ENCODE measurements at regions of chr7 and their contacts with region 1.

Region 1: DNA sequence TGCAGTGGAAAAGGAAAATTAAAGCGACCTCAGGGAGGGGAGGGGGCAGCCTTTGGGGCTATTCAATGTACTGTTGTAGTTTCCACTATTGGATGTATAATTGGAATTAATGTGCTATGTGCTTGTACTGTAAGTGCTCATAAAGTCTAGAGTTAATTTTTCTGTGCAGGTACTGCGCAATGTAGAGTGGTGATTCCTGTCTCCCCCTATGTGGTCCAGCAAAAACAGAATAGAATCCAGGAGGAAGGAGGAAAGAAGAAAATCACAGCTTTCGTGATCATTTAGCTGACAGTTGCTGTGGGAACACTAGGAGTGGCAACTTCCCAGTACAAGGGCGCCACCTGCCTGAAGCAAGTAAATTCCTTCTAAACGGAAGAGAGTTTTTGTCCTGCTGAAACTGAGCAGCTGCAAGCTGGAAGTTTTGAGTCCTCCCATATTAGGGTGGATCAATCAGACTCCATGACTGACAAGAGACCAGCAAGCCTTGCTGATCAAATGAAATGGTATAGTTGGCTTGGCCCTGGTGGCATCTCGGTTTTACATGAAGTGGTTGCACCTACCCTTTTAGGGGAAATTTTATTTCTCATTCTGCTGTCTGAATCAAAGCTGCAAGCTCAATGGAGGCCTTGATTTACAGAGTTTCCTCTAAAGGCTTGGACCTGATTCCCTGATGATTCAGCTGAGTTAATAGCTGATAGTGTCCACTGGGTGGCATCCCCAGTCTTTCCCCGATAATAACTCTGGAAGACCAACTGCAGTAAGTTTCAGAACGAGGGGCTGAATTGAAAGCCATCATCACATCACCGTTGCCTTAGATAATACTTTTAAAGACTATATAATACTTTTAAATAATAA is 299.8 kb downstream of the HGF start:
- DNase-seq: no peak
- H3K4me3 ChIP-seq: no peak overlapping the region
- CTCF ChIP-seq: peak; percentile 72

Region 2: DNA sequence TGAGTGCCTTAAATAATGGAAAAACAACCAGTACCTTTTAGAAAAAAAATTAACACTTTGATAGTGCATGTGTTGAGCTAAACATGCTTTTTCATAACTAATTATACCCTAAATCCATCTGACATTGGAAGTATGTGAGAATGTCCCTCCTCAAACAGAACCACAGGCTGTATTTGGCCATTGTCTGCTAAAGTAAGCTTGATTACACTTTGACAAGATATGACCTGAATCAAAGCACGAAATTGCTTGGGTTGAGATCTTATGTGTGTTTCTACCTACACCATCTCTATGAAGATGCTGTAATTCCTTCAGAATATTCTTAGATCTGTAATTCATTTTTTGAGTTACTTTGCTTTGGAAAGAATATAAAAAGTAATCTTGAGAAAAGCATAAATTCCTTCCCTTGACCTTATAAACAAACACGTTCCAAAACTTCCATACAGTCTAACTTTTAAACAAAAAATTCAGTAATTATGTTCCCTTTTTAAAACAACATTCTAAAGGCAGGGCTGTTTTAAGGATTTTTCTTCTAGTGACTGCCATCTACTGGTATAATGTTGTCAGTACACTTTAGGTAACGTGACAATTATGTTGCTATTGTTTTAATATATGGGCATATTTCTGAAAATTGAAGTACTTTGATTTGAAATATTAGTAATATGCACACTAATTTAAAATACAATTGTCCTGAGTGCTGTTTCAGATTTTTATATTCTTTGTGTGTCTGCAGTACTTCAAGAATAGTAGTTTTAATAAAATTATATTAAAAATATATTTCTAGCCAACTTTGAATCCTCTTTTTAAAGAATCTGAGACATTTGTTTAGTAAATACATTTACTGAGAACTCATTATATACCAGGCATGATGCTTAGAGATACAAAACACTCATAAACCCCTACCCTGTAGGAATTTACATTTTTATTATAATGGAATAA is 810.7 kb before region 1 on chr7:
- CTCF ChIA-PET with region 1: interaction called, 23 read pairs
- POLR2A ChIA-PET with region 1: interaction called, 3 read pairs
- DNase-seq: no peak
- H3K4me3 ChIP-seq: no peak overlapping the region
- CTCF ChIP-seq: peak; percentile 26

Region 3: GRCh38 chr7:80699045-80699638 is 771.0 kb before region 1 on chr7:
- CTCF ChIA-PET with region 1: interaction called, 92 read pairs
- POLR2A ChIA-PET with region 1: no interaction called
- DNase-seq: no peak
- H3K4me3 ChIP-seq: no peak overlapping the region
- CTCF ChIP-seq: peak; percentile 27

Region 4: DNA sequence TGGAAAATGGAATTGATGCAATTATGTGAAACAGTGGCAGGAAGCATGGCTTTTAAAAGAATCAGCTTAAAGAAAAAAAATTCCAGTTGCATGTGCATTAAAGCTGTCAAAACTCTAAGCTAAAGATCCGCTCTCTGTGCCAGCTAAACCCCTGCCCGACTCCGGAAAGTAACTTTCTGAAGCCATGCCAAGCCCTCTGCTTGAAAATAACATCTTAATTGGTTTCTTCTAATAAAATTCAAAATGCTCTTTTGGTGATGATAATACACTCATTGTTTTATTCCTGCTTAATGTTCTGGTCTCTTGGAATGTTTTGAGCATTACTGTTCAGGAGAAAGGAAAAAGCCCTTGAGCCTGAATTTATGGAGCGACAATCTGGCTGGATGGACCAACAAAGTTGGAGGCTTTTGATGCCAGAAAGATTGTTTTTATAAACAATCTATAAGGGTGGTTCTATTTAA is 562.9 kb before region 1 on chr7:
- CTCF ChIA-PET with region 1: interaction called, 10 read pairs
- POLR2A ChIA-PET with region 1: no interaction called
- DNase-seq: no peak
- H3K4me3 ChIP-seq: no peak overlapping the region
- CTCF ChIP-seq: no peak

Region 5: GRCh38 chr7:80918909-80919662 is 551.0 kb before region 1 on chr7 and contains the start of gene SEMA3C:
- CTCF ChIA-PET with region 1: interaction called, 32 read pairs
- POLR2A ChIA-PET with region 1: no interaction called
- DNase-seq: no peak
- H3K4me3 ChIP-seq: peak within 1 kb of the TSS; percentile 73
- CTCF ChIP-seq: peak; percentile 8

Region 6: GRCh38 chr7:81457852-81458522 is 12.1 kb before region 1 on chr7:
- CTCF ChIA-PET with region 1: interaction called, 23 read pairs
- POLR2A ChIA-PET with region 1: no interaction called
- DNase-seq: no peak
- H3K4me3 ChIP-seq: no peak overlapping the region
- CTCF ChIP-seq: peak; percentile 27

Region 7: DNA sequence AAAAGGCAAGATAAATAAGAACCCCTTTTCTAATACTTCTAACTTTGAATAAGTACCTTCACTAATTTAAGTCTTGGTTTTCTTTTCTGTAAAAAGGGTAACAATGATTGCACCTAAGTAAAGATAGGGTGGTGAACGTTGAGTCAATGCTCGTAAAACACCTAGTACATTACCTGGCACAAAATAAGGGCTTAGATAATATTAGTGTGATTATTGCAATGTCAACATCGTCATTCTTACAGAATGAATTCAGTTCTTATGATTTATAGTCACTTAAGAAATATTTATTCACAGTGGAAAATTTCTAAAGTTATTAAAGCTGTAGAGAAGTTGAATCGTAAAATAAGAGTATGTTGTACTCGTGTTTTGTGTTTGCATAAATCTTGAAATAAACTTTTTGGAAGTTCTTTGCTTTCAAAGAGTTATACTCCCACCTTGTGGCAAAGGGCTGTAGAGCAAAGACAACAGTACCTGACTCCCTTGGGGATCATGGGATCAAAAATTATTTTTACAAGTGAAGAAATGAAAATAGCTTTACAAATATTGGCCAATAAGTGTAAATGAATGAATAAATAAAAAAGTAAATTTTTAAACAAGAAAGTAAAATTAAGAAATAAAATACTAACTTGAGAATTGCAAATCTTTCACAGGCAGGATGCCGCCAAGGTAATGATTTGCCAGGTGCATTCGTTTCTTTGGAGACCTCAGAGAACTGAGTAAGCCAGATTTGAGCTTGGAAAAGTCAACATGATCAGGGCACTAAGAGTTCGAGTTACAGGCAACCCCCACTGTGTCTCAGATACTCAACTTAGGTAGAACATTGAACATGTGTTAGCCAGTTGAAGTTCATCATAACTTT is 1259.3 kb after region 1 on chr7:
- CTCF ChIA-PET with region 1: interaction called, 12 read pairs
- POLR2A ChIA-PET with region 1: no interaction called
- DNase-seq: no peak
- H3K4me3 ChIP-seq: no peak overlapping the region
- CTCF ChIP-seq: peak; percentile 41